Activated CD4-positive, alpha-beta T cell treated with anti-CD3 and anti-CD28 coated beads for 36 hours (primary cell): ENCODE measurements at regions of chr19 and their contacts with region 1.

Region 1: DNA sequence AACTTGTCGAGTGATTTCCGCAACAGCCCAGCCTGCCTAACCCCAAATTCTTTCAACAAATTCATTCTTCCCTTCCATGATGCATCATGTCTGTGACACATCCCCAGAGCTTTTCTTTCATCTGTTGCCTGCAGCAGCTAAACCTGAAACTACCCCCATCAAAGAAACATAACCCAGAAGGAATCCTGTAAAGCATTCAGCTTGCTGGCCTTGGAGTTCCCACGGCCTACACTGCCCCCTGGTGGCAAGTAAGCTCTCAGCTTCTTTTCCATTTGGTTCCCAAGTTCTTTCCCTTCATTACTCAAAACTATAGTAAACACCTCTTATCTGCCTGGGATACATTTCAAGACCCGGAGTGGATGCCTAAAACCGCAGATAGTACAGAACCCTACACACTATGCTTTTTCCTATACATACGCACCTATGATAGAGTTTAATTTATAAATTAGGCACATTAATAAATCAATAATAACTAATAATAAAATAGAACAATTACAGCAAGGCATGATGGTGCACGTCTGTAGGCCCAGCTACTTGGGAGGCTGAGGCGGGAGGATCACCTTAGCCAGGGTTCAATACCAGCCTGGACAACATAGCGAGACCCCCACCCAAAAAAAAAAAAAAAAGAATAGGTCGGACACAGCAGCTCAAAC is 7.4 kb downstream of the ETHE1 start:
- DNase-seq: peak; percentile 90
- ATAC-seq: peak; percentile 100
- H3K4me3 Mint-ChIP-seq: no peak overlapping the region
- H3K27ac Mint-ChIP-seq: peak overlapping the region; percentile 19
- H3K4me1 Mint-ChIP-seq: peaks cover 17% of the 10 kb centered on the region
- H3K27me3 Mint-ChIP-seq: no peaks in the 10 kb centered on the region

Region 2: DNA sequence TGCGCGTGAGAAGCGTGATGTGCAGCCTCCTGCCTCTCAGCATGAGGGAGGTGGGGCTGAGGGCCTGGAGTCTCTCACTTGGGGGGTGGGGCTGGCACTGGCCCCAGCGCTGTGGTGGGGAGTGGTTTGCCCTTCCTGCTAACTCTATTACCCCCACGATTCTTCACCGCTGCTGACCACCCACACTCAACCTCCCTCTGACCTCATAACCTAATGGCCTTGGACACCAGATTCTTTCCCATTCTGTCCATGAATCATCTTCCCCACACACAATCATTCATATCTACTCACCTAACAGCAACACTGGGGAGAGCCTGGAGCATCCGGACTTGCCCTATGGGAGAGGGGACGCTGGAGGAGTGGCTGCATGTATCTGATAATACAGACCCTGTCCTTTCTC is 157.4 kb before region 1 on chr19:
- CTCF ChIA-PET with region 1: no interaction called
- POLR2A ChIA-PET with region 1: no interaction called
- intact Hi-C with region 1: no loop called
- DNase-seq: no peak
- ATAC-seq: no peak
- H3K4me3 Mint-ChIP-seq: no peak overlapping the region
- H3K27ac Mint-ChIP-seq: no peak overlapping the region
- H3K4me1 Mint-ChIP-seq: no peaks in the 10 kb centered on the region
- H3K27me3 Mint-ChIP-seq: no peaks in the 10 kb centered on the region

Region 3: GRCh38 chr19:43425567-43426392 is 93.8 kb before region 1 on chr19:
- CTCF ChIA-PET with region 1: interaction called, 13 read pairs
- POLR2A ChIA-PET with region 1: no interaction called
- intact Hi-C with region 1: no loop called
- DNase-seq: no peak
- ATAC-seq: no peak
- H3K4me3 Mint-ChIP-seq: no peak overlapping the region
- H3K27ac Mint-ChIP-seq: no peak overlapping the region
- H3K4me1 Mint-ChIP-seq: peaks cover 16% of the 10 kb centered on the region
- H3K27me3 Mint-ChIP-seq: no peaks in the 10 kb centered on the region

Region 4: GRCh38 chr19:43433358-43433673 is 86.2 kb before region 1 on chr19:
- CTCF ChIA-PET with region 1: interaction called, 44 read pairs
- POLR2A ChIA-PET with region 1: no interaction called
- intact Hi-C with region 1: loop called (anchors 1 kb)
- DNase-seq: no peak
- ATAC-seq: no peak
- H3K4me3 Mint-ChIP-seq: no peak overlapping the region
- H3K27ac Mint-ChIP-seq: no peak overlapping the region
- H3K4me1 Mint-ChIP-seq: peaks cover 42% of the 10 kb centered on the region
- H3K27me3 Mint-ChIP-seq: no peaks in the 10 kb centered on the region

Region 5: DNA sequence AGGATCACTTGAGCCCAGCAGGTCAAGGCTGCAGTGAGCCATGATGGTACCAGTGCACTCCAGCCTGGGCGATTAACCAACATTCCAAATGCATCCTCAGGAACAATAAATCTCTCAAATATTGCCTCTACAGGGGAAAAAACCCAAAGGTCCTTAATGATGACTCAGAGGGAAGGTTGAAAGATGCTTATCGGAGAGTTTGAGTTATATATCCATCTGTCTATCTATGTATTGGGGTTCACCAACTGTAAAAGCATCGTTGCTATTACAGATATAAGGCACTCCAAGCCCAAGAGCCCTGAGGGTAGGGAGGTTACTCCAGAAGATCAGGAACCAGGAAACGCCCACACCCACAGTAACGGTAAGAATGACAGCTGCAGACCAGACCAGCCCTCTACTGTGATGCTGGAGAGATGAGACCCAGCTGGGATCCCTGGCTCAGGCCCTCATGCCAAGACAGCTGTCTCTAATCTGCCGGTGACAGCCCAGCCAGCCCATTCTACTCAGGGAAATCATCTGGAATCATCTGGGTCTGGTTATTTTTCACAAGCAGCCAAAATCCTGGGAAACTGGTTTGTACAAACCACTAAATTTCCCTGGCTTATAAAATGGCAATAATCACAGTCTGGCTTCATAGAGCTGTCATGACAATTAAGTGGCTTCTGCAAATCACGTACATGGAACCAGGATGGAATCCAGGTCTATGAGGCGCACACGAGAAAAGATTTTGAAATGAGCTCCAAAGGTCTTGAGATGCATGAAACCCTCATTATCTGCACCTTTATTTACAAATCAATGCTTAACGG is 81.1 kb before region 1 on chr19:
- CTCF ChIA-PET with region 1: interaction called, 184 read pairs
- POLR2A ChIA-PET with region 1: no interaction called
- intact Hi-C with region 1: loop called (anchors 1 kb)
- DNase-seq: peak; percentile 49
- ATAC-seq: no peak
- H3K4me3 Mint-ChIP-seq: no peak overlapping the region
- H3K27ac Mint-ChIP-seq: peak overlapping the region; percentile 78
- H3K4me1 Mint-ChIP-seq: peaks cover 40% of the 10 kb centered on the region
- H3K27me3 Mint-ChIP-seq: no peaks in the 10 kb centered on the region

Region 6: DNA sequence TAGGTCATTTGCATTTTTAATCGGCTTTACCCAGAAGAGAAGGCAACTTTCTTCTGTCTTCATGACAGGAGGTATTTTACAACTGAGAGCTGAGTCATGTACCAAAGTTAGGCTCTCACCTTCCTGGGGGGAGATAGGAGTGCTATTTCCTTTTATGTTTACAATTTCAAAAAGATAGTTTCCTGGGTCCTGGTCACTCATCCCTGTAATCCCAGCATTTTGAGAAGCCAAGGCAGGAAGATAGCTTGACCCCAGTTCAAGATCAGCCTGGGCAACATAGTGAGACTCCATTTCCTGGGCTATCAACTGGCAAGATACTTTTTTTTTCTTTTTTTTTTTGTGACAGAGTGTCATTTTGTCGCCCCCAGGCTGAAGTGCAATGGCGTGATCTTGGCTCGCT is 61.8 kb before region 1 on chr19:
- CTCF ChIA-PET with region 1: interaction called, 22 read pairs
- POLR2A ChIA-PET with region 1: no interaction called
- intact Hi-C with region 1: no loop called
- DNase-seq: no peak
- ATAC-seq: no peak
- H3K4me3 Mint-ChIP-seq: no peak overlapping the region
- H3K27ac Mint-ChIP-seq: no peak overlapping the region
- H3K4me1 Mint-ChIP-seq: peaks cover 27% of the 10 kb centered on the region
- H3K27me3 Mint-ChIP-seq: no peaks in the 10 kb centered on the region

Region 7: DNA sequence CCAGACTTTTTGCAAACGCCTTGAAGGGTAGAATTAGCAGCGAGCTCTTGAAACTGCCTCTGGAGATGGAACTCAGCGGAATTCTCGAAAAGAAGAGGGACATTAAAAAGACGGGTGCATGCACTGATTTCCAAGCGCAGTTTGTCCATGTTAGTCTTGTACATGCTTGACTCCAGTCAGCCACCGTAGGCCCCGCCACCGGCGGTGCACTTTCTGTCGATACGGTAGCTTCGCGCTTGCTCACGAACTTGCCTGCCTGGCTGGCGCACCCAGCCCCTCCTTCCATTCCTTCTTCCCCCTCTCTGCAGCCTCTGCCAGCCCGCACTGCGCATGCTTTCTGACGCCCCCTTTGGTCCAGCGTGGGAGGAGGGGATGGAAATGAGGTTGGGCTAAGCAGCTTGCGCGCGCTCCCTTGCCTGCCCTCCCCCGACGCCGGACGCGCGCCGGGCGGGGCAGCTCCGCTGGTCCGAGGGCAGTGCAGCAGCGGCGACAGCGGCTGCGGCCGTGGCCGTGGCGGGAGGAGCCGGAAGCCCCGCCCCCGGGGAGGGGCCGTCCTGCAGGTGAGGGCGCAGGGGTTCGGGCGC is 13.5 kb after region 1 on chr19 and contains the start of gene ZNF575:
- CTCF ChIA-PET with region 1: interaction called, 24 read pairs
- POLR2A ChIA-PET with region 1: interaction called, 11 read pairs
- intact Hi-C with region 1: no loop called
- DNase-seq: peak; percentile 95
- ATAC-seq: peak; percentile 57
- H3K4me3 Mint-ChIP-seq: peak within 1 kb of the TSS; percentile 83
- H3K27ac Mint-ChIP-seq: peak within 1 kb of the TSS; percentile 97
- H3K4me1 Mint-ChIP-seq: peaks cover 20% of the 10 kb centered on the region
- H3K27me3 Mint-ChIP-seq: no peaks in the 10 kb centered on the region
- total RNA-seq, gene ZNF575: 3.4 to 4.3 TPM